BJ (cell line): ENCODE measurements at regions of chr4 and their contacts with region 1.

Region 1: GRCh38 chr4:165464813-165465381 is 86.1 kb downstream of the CPE start:
- DNase-seq: no peak
- H3K4me3 ChIP-seq: no peak overlapping the region
- H3K27me3 ChIP-seq: 0 out of 2 replicates have a peak, but pooled peaks cover 2% of the 10 kb centered on the region
- CTCF ChIP-seq: peak; percentile 74

Region 2: DNA sequence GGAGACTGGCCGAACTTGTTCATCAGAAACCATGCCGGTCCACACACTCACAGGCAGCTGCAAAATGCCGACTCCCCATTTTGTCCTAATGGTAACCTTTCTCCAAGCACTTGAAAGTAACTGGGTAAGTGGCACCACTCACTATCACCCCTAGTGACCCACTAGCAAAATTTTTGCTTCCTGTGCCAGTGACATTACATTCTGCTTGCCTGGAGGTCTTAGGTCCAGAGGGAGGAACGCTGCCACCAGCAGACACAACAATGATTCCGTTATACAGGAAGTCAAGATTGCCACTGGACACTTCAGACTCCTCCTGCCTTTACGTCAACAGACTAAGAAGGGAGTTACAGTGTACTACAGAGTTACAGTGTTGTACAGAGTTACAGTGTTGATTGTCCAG is 340.4 kb before region 1 on chr4:
- CTCF ChIA-PET with region 1: interaction called, 11 read pairs
- POLR2A ChIA-PET with region 1: no interaction called
- DNase-seq: no peak
- H3K4me3 ChIP-seq: no peak overlapping the region
- H3K27me3 ChIP-seq: no peaks in the 10 kb centered on the region
- CTCF ChIP-seq: no peak

Region 3: DNA sequence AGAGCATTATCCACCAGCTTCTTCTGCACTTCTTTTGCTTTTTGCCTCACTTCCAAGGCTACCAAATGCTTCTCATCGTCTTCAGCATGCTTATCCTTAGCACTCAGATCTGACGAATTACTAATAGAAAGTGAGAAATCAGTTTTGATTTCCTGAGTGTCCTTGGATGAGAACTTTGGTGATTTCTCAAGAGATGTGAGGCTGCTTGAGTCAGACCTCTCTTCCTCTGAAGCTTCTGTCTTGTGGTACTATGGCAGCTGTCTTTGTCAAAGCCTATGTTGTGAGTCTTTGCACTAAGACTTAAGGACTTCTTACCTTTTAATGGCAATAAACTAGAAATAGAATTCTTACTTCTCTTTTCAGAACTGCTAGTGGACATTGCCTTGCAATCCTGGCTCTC is 83.8 kb after region 1 on chr4:
- CTCF ChIA-PET with region 1: no interaction called
- POLR2A ChIA-PET with region 1: no interaction called
- DNase-seq: no peak
- H3K4me3 ChIP-seq: no peak overlapping the region
- H3K27me3 ChIP-seq: no peaks in the 10 kb centered on the region
- CTCF ChIP-seq: no peak

Region 4: DNA sequence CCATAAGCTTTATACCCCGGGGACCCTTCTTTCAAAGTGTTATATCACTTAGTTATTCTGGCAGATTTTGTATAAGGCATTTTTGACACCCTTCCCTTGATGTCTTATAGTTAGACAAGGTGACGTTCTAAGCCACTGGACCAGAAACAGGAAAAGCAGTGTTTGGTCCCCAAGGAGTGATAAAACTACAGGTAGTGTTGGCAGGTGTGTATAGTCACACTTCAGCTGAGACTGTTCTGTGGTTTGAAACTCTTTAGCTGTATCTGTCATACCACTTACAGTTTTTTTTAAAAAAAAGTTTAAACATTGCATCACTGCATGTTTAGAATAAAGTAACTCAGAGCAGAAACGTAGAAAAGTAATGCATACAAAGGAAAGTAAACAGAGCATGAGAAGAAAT is 456.6 kb after region 1 on chr4:
- CTCF ChIA-PET with region 1: no interaction called
- POLR2A ChIA-PET with region 1: no interaction called
- DNase-seq: no peak
- H3K4me3 ChIP-seq: no peak overlapping the region
- H3K27me3 ChIP-seq: no peaks in the 10 kb centered on the region
- CTCF ChIP-seq: no peak